ENCODE measurements at regions of chr17 and their contacts with region 1.

Region 1: DNA sequence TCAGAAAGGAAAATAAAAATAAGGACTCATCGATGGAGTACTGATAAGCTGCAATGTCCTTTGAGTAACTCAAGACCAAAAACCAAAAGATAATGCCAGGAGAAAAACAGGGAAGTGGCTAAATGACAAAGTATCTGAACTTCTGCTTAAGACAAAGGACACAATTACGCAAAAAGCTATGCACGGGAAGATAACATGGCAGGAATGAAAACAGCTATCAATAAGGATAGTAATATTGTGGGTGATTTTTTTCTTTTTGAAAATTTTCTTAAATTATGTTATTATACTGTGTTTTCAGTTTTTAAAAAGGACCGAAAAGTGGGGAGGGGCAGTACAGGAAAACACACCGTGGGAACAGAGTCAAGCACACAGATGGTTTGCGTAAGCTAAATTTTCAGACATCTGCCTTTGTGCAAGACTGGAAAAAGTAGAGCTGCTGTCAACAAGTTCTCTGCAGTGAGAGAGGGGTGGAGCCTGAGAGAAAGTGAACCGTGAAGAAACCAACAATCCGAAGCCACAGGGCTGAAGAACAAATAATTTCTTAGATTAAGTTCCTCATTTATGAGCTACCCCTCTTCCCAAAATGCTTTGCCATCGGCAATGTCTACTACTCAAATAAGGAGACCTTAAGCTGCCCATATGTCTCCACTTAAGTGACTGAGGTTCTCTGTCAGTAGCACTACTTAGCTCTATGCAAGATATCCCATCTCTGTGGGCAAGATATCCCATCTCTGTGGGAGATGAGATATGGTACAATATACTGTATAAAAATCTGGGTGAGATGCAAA is 99.9 kb upstream of the CORO6 start:
- DNase-seq: peak; percentile 84
- H3K4me3 ChIP-seq: no peak overlapping the region
- H3K27ac ChIP-seq: peak overlapping the region; percentile 32
- H3K4me1 ChIP-seq: peaks cover 35% of the 10 kb centered on the region
- H3K27me3 ChIP-seq: no peaks in the 10 kb centered on the region
- CTCF ChIP-seq: no peak
- POLR2A ChIP-seq: no peak

Region 2: GRCh38 chr17:29630630-29631193 is 91.9 kb before region 1 on chr17:
- CTCF ChIA-PET with region 1: no interaction called
- POLR2A ChIA-PET with region 1: no interaction called
- dilution Hi-C with region 1: no loop called
- intact Hi-C with region 1: no loop called
- DNase-seq: no peak
- H3K4me3 ChIP-seq: no peak overlapping the region
- H3K27ac ChIP-seq: no peak overlapping the region
- H3K4me1 ChIP-seq: no peaks in the 10 kb centered on the region
- H3K27me3 ChIP-seq: no peaks in the 10 kb centered on the region
- CTCF ChIP-seq: no peak
- POLR2A ChIP-seq: no peak

Region 3: DNA sequence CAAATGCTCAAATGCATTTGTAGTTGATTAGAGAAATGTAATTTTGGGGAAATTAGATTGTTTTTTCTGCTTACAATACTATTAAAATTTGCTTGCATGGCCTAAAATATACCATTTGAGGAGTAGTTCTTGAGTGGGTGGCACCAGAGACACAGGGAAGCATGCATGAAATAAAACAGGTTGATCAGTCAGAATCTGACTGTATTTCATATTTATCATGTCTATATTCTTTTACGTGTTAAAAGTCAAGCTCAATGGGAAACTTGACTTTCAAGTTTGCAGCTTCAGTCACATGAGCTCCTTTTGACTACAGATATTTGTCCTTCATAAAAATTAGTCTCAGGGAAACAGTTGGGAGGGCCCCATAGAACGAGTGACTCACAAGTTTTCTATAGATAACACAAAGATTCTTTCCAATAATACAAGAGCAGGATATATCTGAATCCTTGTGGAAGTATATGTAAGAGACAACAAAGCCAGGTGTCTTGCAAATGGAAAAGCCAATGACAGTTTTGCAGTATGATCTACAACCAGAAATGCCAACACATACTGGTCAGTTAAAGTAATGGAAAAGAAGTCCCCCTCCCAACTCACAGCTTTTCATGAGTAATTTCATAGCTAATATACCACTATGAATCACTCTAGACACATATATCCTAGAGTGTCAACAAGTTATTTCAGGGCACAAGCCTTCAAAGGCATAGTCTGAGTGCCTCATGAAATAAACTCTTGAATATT is 57.7 kb before region 1 on chr17:
- CTCF ChIA-PET with region 1: no interaction called
- POLR2A ChIA-PET with region 1: no interaction called
- dilution Hi-C with region 1: no loop called
- intact Hi-C with region 1: loop called (anchors 1 kb)
- DNase-seq: peak; percentile 93
- H3K4me3 ChIP-seq: no peak overlapping the region
- H3K27ac ChIP-seq: peak overlapping the region; percentile 93
- H3K4me1 ChIP-seq: peaks cover 27% of the 10 kb centered on the region
- H3K27me3 ChIP-seq: no peaks in the 10 kb centered on the region
- CTCF ChIP-seq: no peak
- POLR2A ChIP-seq: no peak

Region 4: DNA sequence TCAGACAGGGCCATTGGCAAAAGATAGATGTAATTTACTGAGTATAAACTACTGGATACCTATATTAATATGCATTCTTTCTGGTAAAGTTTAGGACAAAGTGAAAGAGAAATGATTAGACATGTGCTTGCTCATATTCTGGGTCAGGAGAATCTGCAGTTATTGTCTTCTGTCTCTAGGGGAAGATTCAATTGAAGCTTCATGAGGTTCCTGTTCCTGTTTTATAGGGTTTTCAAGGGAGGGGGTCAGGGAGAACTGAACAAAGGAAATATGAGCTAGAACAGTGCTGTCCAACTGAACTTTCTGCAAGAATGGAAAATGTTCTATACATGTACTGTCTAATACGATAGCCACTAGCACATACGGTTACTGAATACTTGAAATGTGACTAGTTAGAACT is 40.6 kb before region 1 on chr17:
- CTCF ChIA-PET with region 1: interaction called, 3 read pairs
- POLR2A ChIA-PET with region 1: no interaction called
- dilution Hi-C with region 1: no loop called
- intact Hi-C with region 1: loop called (anchors 1 kb)
- DNase-seq: peak; percentile 41
- H3K4me3 ChIP-seq: no peak overlapping the region
- H3K27ac ChIP-seq: peak overlapping the region; percentile 91
- H3K4me1 ChIP-seq: peaks cover 33% of the 10 kb centered on the region
- H3K27me3 ChIP-seq: no peaks in the 10 kb centered on the region
- CTCF ChIP-seq: no peak
- POLR2A ChIP-seq: no peak

Region 5: GRCh38 chr17:29740017-29740416 is 17.4 kb after region 1 on chr17:
- CTCF ChIA-PET with region 1: interaction called, 8 read pairs
- POLR2A ChIA-PET with region 1: interaction called, 9 read pairs
- dilution Hi-C with region 1: no loop called
- intact Hi-C with region 1: loop called (anchors 1 kb)
- DNase-seq: peak; percentile 12
- H3K4me3 ChIP-seq: no peak overlapping the region
- H3K27ac ChIP-seq: no peak overlapping the region
- H3K4me1 ChIP-seq: peaks cover 42% of the 10 kb centered on the region
- H3K27me3 ChIP-seq: no peaks in the 10 kb centered on the region
- CTCF ChIP-seq: no peak
- POLR2A ChIP-seq: no peak

Region 6: DNA sequence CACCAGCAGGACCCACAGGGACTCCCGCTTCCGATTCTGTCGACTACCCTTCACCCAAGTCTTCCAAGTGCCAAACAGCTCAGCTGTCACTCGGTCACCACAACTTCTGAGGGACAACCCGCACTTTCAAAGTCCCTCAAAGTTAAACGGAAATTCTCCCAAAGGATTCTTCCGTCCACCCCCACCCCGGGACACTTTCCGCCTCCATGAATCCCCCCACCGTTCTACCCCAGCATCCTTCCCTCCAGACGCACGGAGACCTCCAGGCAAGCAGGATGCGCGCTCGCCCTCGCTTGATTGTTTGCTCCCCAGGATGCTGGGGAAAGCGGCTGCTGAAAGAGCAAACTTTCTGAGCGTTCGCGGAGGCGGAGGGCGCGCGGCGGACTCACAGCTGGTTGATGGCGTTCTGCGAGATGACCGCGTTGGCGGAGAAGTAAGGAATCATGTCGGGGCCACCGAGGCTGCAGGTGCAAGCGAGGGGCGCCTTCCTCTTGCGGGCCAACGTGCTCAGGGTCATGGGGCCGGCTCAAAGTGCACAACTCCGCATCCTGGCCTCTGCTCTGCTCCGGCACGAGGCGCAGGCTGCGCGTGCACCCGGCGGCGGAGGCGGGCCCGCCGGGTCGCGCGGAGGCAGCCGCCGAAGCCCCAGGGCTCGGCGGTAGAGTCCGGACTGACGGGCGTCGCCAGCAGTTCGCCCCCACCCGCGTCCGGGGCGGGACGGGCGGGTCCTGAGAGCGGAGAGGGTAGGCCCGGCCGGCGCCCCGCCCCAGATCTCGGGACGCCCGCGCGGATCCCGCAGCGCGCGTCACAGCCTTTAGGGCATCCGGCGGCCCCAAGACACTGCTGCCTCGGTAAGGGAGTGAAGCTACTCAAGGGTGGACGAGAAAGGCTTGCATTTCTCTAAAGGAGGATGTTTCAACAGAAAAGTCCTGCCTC is 38.4 kb after region 1 on chr17:
- CTCF ChIA-PET with region 1: interaction called, 8 read pairs
- POLR2A ChIA-PET with region 1: no interaction called
- dilution Hi-C with region 1: no loop called
- intact Hi-C with region 1: loop called (anchors 1 kb)
- DNase-seq: peak; percentile 89
- H3K4me3 ChIP-seq: peak overlapping the region; percentile 56 to 93 (median 89)
- H3K27ac ChIP-seq: peak overlapping the region; percentile 84
- H3K4me1 ChIP-seq: peaks cover 11% of the 10 kb centered on the region
- H3K27me3 ChIP-seq: no peaks in the 10 kb centered on the region
- CTCF ChIP-seq: no peak
- POLR2A ChIP-seq: peak; percentile 90

Region 7: GRCh38 chr17:29793519-29793918 is 70.9 kb after region 1 on chr17:
- CTCF ChIA-PET with region 1: no interaction called
- POLR2A ChIA-PET with region 1: no interaction called
- dilution Hi-C with region 1: no loop called
- intact Hi-C with region 1: no loop called
- DNase-seq: no peak
- H3K4me3 ChIP-seq: no peak overlapping the region
- H3K27ac ChIP-seq: no peak overlapping the region
- H3K4me1 ChIP-seq: no peaks in the 10 kb centered on the region
- H3K27me3 ChIP-seq: no peaks in the 10 kb centered on the region
- CTCF ChIP-seq: no peak
- POLR2A ChIP-seq: no peak